WTC11 (cell line): ENCODE measurements at regions of chr20 and their contacts with region 1.

Region 1: DNA sequence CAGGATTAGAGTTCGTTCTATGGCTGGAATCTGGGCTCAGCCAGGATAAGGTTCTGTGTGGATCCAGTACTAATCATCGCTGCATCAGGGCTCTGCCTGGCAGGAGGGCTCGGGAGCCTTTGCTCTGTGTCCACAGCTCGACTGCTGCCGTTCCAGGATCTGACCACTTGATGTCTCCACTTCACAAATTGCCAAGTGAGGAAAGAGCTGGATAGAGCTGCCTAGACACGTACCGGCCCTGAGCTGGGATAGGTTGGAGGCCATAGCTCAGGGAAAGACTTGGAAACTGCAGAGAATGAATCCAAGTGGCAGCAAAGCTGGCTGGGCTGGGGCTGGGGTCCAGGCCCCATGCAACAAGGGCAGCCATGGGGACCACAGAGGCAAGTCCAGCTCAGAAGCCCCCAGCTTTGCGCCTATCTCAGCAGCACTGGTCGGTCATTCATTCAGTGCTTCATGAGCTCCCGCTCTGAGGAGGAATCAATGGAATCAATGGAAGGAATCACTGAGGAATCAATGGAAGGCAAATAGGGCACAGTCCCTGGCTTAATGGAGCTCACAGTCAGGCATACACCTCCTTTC is 38.0 kb upstream of the TOP1 start:
- DNase-seq: peak; percentile 84
- ATAC-seq: peak; percentile 100
- H3K4me3 Mint-ChIP-seq: no peak overlapping the region
- H3K27ac Mint-ChIP-seq: peak overlapping the region; percentile 48; the same call in 1 of the 2 replicates
- H3K4me1 Mint-ChIP-seq: peaks cover 13% of the 10 kb centered on the region
- H3K27me3 Mint-ChIP-seq: peaks cover 11% of the 10 kb centered on the region
- CTCF ChIP-seq: 0 out of 2 replicates have a peak, but pooled peaks have one; percentile 5

Region 2: GRCh38 chr20:41006126-41006935 is 15.7 kb after region 1 on chr20:
- CTCF ChIA-PET with region 1: interaction called, 13 read pairs
- POLR2A ChIA-PET with region 1: no interaction called
- DNase-seq: no peak
- ATAC-seq: no peak
- H3K4me3 Mint-ChIP-seq: no peak overlapping the region
- H3K27ac Mint-ChIP-seq: no peak overlapping the region
- H3K4me1 Mint-ChIP-seq: peaks cover 21% of the 10 kb centered on the region
- H3K27me3 Mint-ChIP-seq: peaks cover 10% of the 10 kb centered on the region
- CTCF ChIP-seq: no peak

Region 3: GRCh38 chr20:41028348-41029148 is 37.9 kb after region 1 on chr20 and contains the start of gene TOP1:
- CTCF ChIA-PET with region 1: interaction called, 15 read pairs
- POLR2A ChIA-PET with region 1: no interaction called
- DNase-seq: peak; percentile 100
- ATAC-seq: peak; percentile 98
- H3K4me3 Mint-ChIP-seq: peak within 1 kb of the TSS; percentile 82
- H3K27ac Mint-ChIP-seq: peak within 1 kb of the TSS; percentile 89
- H3K4me1 Mint-ChIP-seq: peaks cover 49% of the 10 kb centered on the region
- H3K27me3 Mint-ChIP-seq: peaks cover 47% of the 10 kb centered on the region
- CTCF ChIP-seq: no peak
- total RNA-seq, gene TOP1: 77.7 to 81.8 TPM (median 80.0 TPM) in 3 replicates

Region 4: DNA sequence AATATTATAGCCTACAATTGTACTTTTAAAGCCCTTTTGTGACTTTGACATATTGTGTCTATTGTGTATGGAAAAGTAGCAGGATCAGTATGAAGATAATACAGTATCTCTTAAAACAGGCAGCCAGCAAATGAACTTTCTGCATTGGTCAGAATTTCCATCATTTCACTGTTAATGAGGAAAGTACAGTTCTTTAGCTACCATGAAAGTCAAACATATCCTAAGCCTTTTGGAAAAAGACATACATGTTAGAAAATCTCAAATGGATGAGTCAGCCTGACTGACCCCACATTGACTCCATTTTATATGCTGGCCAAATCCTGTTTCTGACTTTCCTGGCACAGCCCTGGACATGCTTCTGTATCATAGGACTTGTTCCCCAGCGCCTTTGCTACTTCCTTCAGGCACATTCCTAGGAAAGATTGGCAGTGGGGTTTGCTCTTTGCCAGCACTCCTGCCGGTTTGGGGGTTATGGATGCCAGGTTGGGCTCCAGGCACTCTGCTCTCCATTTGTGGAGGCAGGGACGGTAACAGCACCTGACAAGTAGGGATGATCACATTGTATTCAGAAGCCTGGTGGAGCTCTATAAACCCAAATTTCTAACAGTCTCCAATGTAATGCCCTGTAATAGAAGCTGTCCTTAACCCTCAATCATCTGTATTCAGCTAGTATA is 81.7 kb after region 1 on chr20:
- CTCF ChIA-PET with region 1: interaction called, 41 read pairs
- POLR2A ChIA-PET with region 1: no interaction called
- DNase-seq: no peak
- ATAC-seq: no peak
- H3K4me3 Mint-ChIP-seq: no peak overlapping the region
- H3K27ac Mint-ChIP-seq: no peak overlapping the region
- H3K4me1 Mint-ChIP-seq: peaks cover 30% of the 10 kb centered on the region
- H3K27me3 Mint-ChIP-seq: no peaks in the 10 kb centered on the region
- CTCF ChIP-seq: no peak

Region 5: DNA sequence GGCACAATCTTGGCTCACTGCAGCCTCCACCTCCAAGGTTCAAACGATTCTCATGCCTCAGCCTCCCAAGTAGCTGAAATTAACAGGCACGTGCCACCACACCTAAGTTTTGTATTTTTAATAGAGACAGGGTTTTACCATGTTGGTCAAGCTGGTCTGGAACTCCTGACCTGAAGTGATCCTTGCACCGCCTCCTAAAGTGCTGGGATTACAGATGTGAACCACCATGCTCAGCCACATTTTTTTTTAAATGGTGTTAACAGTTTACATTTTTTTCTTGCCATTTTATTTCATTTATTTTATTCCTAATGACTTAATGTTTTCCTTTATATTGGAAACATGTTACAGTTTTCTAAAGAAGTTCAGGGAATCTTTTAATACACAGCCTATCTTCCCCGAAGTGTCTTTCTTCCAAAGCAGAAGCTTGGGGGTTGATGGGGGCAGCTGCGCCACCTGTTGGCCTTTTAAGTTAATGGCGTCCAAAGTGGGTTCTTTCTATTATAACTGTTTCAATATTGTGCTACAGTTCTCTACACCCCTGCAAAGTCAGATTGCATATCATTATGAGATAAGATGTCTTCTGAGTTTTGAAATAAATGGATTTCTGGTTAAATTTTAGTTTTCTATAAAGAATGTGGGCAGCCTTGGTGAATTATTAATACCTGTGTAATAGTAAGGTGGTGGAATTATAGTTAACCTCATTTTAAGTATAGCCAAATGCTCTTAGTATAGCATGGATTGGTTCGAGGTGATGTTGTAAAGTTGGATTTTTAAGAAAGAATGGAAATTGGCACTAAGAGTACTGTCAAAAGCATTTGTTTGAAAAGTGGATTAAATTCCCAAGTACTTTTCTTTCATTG is 104.7 kb after region 1 on chr20:
- CTCF ChIA-PET with region 1: interaction called, 106 read pairs
- POLR2A ChIA-PET with region 1: interaction called, 6 read pairs
- DNase-seq: peak; percentile 56
- ATAC-seq: peak; percentile 58
- H3K4me3 Mint-ChIP-seq: no peak overlapping the region
- H3K27ac Mint-ChIP-seq: no peak overlapping the region
- H3K4me1 Mint-ChIP-seq: no peaks in the 10 kb centered on the region
- H3K27me3 Mint-ChIP-seq: no peaks in the 10 kb centered on the region
- CTCF ChIP-seq: peak; percentile 70